B cell (primary cell): ENCODE measurements at regions of chr10 and their contacts with region 1.

Region 1: DNA sequence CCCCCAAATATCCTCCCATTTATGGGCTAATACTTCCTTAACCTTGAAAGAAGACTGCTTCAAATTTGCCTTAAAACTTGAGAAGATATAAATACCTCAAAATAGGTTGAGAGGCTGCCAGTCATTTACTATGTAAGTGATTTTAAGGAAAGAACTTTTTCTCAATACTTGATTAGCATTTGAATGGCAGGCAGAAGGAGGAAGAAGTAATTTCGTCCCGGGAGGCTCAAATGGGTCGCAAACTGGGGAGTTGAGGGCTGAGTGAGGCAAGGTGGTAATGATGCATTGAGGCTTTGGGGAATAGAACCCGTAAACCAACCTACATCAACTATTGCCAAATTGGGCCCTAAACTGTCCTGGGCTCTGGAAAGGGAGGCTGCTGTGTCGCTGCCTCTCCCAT is 11.1 kb downstream of the CAMK1D start:
- DNase-seq: no peak
- ATAC-seq: no peak
- H3K4me3 ChIP-seq: no peak overlapping the region
- H3K4me3 Mint-ChIP-seq: no peak overlapping the region
- H3K27ac ChIP-seq: peak overlapping the region in 1 of 2 donors; percentile 51
- H3K27ac Mint-ChIP-seq: peak overlapping the region; percentile 8
- H3K4me1 ChIP-seq: peaks cover 44 to 57% of the 10 kb centered on the region in 2 donors
- H3K4me1 Mint-ChIP-seq: peaks cover 71% of the 10 kb centered on the region
- H3K27me3 ChIP-seq: no peaks in the 10 kb centered on the region
- H3K27me3 Mint-ChIP-seq: no peaks in the 10 kb centered on the region
- CTCF ChIP-seq: no peak

Region 2: DNA sequence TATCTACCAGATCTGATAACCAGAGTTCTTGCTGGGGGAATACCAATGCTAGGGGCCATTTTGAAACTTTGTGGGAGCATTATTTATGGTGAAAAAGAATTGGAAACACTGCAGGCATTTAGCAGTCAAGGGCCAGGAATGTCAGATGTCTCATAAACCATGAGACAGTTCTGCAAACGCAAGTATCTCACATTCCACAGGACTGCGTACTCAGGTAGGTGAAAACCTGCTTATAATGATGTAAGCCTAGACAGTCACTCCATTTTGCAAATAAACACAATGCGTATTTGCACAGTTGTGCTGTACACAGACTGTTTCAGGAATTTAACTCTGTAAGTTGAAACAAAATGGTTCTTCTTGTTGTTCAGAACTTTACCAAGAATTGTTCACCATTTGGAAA is 584.4 kb before region 1 on chr10:
- CTCF ChIA-PET with region 1: no interaction called
- POLR2A ChIA-PET with region 1: no interaction called
- intact Hi-C with region 1: no loop called
- DNase-seq: no peak
- ATAC-seq: no peak
- H3K4me3 ChIP-seq: no peak overlapping the region
- H3K4me3 Mint-ChIP-seq: no peak overlapping the region
- H3K27ac ChIP-seq: no peak overlapping the region
- H3K27ac Mint-ChIP-seq: no peak overlapping the region
- H3K4me1 ChIP-seq: no peaks in the 10 kb centered on the region
- H3K4me1 Mint-ChIP-seq: no peaks in the 10 kb centered on the region
- H3K27me3 ChIP-seq: no peaks in the 10 kb centered on the region
- H3K27me3 Mint-ChIP-seq: peaks cover 10% of the 10 kb centered on the region
- CTCF ChIP-seq: no peak

Region 3: DNA sequence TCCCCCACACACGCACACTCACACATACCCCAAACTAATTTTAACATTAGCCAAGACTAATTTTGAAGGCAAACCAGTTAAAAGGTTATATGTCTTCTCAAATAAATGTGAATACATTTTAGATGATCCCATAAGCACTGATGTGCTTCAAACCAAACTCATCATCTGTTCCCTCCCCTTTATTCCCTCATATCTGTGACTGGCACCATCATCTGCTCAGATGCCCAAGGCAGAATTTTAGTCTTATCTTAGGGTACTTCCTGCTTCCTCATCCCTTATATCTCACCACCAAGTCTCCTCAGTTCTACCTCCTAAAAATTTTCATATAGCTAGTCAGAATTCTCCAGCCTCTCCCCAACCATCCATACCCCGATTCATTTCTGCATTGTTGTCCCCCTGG is 398.3 kb before region 1 on chr10:
- CTCF ChIA-PET with region 1: no interaction called
- POLR2A ChIA-PET with region 1: no interaction called
- intact Hi-C with region 1: no loop called
- DNase-seq: no peak
- ATAC-seq: no peak
- H3K4me3 ChIP-seq: no peak overlapping the region
- H3K4me3 Mint-ChIP-seq: no peak overlapping the region
- H3K27ac ChIP-seq: no peak overlapping the region
- H3K27ac Mint-ChIP-seq: peak overlapping the region; percentile 32
- H3K4me1 ChIP-seq: no peaks in the 10 kb centered on the region
- H3K4me1 Mint-ChIP-seq: no peaks in the 10 kb centered on the region
- H3K27me3 ChIP-seq: no peaks in the 10 kb centered on the region
- H3K27me3 Mint-ChIP-seq: no peaks in the 10 kb centered on the region
- CTCF ChIP-seq: no peak

Region 4: GRCh38 chr10:12322583-12323131 is 37.8 kb before region 1 on chr10:
- CTCF ChIA-PET with region 1: no interaction called
- POLR2A ChIA-PET with region 1: interaction called, 14 read pairs
- intact Hi-C with region 1: no loop called
- DNase-seq: no peak
- ATAC-seq: no peak
- H3K4me3 ChIP-seq: no peak overlapping the region
- H3K4me3 Mint-ChIP-seq: no peak overlapping the region
- H3K27ac ChIP-seq: no peak overlapping the region
- H3K27ac Mint-ChIP-seq: no peak overlapping the region
- H3K4me1 ChIP-seq: peaks cover 4 to 15% of the 10 kb centered on the region in 2 donors
- H3K4me1 Mint-ChIP-seq: peaks cover 29% of the 10 kb centered on the region
- H3K27me3 ChIP-seq: no peaks in the 10 kb centered on the region
- H3K27me3 Mint-ChIP-seq: no peaks in the 10 kb centered on the region
- CTCF ChIP-seq: no peak